ENCODE measurements at regions of chr4 and their contacts with region 1.

Region 1: GRCh38 chr4:128553686-128554515 is 255.6 kb upstream of the JADE1 start:
- DNase-seq: no peak
- H3K4me3 Mint-ChIP-seq: peak overlapping the region; percentile 87
- H3K27ac Mint-ChIP-seq: no peak overlapping the region
- H3K4me1 Mint-ChIP-seq: peaks cover 9% of the 10 kb centered on the region
- H3K27me3 Mint-ChIP-seq: peaks cover 28% of the 10 kb centered on the region

Region 2: GRCh38 chr4:128517739-128518510 is 36.0 kb before region 1 on chr4:
- intact Hi-C with region 1: loop called (anchors 5 kb)
- DNase-seq: no peak
- H3K4me3 Mint-ChIP-seq: no peak overlapping the region
- H3K27ac Mint-ChIP-seq: peak overlapping the region; percentile 13
- H3K4me1 Mint-ChIP-seq: peaks cover 21% of the 10 kb centered on the region
- H3K27me3 Mint-ChIP-seq: no peaks in the 10 kb centered on the region